Ascending aorta (tissue), 2 donors: ENCODE measurements at regions of chr1 and their contacts with region 1.

Region 1: DNA sequence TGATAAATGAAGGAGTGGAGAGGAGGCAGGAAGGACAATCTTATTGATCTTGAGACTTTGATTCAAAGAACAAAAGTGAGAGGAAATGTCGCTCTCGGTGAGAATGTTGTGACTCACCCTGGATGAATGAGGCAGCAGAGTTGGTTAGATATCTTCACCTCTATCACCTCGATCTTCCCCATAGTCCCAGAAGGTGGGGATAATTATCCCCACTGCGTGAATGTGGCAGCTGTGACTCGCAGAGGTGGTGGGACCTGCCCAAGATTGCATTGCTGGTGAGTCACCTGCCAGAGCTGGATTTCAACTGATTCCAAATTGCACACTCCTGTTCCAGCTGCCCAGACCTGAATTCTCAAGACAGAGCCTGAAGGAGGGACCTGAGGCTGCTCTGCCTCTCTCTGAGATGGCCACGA is 105.0 kb downstream of the MATN1 start:
- DNase-seq: peak in 1 of 2 donors; percentile 4
- H3K4me3 ChIP-seq: no peak overlapping the region
- H3K27ac ChIP-seq: no peak overlapping the region
- H3K4me1 ChIP-seq: no peaks in the 10 kb centered on the region
- H3K27me3 ChIP-seq: no peaks in the 10 kb centered on the region
- CTCF ChIP-seq: no peak

Region 2: GRCh38 chr1:30601316-30602085 is 16.8 kb before region 1 on chr1:
- intact Hi-C with region 1: loop called (anchors 1 kb)
- DNase-seq: no peak
- H3K4me3 ChIP-seq: no peak overlapping the region
- H3K27ac ChIP-seq: no peak overlapping the region
- H3K4me1 ChIP-seq: no peaks in the 10 kb centered on the region
- H3K27me3 ChIP-seq: no peaks in the 10 kb centered on the region
- CTCF ChIP-seq: no peak

Region 3: DNA sequence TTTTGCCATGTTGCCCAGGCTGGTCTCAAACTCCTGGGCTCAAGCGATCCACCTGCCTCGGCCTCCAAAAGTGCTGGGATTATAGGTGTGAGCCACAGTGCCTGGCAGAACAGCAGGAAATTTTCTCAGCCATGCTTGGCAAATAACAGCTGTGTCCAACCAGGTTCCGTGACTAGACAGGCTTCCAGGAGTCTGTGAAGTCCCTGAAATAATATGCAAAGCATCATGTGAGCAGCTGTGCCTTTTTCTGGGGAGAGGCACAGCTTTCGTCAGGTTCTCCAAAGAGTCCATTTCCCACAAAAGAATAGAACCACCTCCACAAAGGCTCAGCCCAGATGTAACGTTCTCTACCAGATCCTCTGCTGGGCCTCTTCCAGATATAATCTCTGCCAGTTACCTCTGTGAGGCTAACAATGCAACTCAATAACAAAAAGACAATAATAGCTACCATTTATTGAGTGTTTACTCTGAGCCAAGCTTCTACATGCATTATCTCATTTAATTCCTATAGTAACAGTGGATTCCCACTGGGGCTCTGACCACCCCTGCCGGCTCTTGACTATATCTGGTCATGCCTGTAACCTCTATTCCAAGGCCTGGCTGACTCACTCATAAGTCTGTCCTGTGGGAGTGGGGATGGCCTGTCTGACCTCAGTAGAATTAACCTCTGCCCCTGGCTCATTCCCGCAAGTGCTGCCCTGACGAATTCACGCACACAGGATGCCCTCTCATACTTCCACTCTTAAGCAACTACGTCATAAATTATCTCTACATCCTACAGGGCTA is 625.4 kb after region 1 on chr1:
- intact Hi-C with region 1: no loop called
- DNase-seq: no peak
- H3K4me3 ChIP-seq: no peak overlapping the region
- H3K27ac ChIP-seq: no peak overlapping the region
- H3K4me1 ChIP-seq: peaks cover 3 to 6% of the 10 kb centered on the region in 2 donors
- H3K27me3 ChIP-seq: no peaks in the 10 kb centered on the region
- CTCF ChIP-seq: no peak